Esophagus muscularis mucosa (tissue), 4 donors: ENCODE measurements at regions of chr16 and their contacts with region 1.

Region 1: GRCh38 chr16:82263521-82264143 is 93.6 kb upstream of the MPHOSPH6 start:
- DNase-seq: no peak
- H3K4me3 ChIP-seq: no peak overlapping the region
- H3K27ac ChIP-seq: no peak overlapping the region
- H3K4me1 ChIP-seq: peaks cover 8 to 10% (median 9%) of the 10 kb centered on the region in 4 donors
- H3K27me3 ChIP-seq: no peaks in the 10 kb centered on the region
- CTCF ChIP-seq: peak; percentile 77 to 94 (median 93)
- EP300 ChIP-seq: no peak
- POLR2A ChIP-seq: no peak

Region 2: DNA sequence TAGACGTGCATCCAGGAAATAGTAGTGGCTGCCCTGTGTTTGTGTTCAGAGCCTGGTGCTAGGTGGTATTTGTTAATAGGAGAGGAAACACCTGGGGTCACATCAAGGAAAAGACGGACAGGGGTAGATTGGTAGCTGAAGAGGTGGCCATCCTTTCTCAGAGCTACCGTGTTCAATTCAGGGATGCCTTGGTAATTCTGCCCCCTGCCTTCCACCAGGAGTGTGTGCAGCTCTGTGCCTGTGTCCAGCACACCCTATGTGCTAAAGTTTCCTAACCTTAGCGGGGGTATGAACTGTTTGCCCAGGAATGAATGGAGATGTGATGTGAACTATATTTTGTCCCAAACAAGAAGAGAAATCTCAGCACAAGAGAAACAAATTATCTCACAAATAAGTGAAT is 80.5 kb after region 1 on chr16:
- intact Hi-C with region 1: loop called (anchors 2 kb)
- DNase-seq: peak; percentile 79
- H3K4me3 ChIP-seq: no peak overlapping the region
- H3K27ac ChIP-seq: no peak overlapping the region
- H3K4me1 ChIP-seq: no peaks in the 10 kb centered on the region
- H3K27me3 ChIP-seq: peaks cover 0 to 6% (median 0%) of the 10 kb centered on the region in 4 donors
- CTCF ChIP-seq: peak; percentile 33 to 46 (median 36)
- EP300 ChIP-seq: no peak
- POLR2A ChIP-seq: no peak

Region 3: DNA sequence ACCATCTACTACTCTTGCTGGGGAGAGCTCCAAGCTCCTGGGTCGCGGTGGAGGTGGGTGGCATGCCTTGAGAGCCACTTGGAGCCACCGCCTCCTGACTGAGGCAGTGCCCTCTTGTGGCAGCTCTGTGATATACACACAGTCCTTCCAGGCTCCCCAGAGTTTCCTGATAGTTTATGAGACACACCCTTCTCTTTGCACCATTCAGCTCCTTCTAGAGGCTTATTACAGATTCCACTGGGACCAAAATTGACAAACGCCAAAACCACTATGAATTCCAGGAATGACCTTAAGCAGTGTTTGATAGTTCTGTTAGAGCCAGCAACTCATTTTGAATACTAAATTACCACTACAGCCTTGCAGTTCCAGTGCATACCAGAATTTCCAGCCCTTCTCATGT is 193.1 kb after region 1 on chr16:
- intact Hi-C with region 1: loop called (anchors 5 kb)
- DNase-seq: no peak
- H3K4me3 ChIP-seq: no peak overlapping the region
- H3K27ac ChIP-seq: no peak overlapping the region
- H3K4me1 ChIP-seq: peaks cover 0 to 4% (median 0%) of the 10 kb centered on the region in 4 donors
- H3K27me3 ChIP-seq: no peaks in the 10 kb centered on the region
- CTCF ChIP-seq: peak; percentile 54 to 70 (median 56)
- EP300 ChIP-seq: no peak
- POLR2A ChIP-seq: no peak